Panc1 (cell line): ENCODE measurements at regions of chr11 and their contacts with region 1.

Region 1: GRCh38 chr11:9914064-9914463 is 250.2 kb downstream of the SWAP70 start:
- DNase-seq: no peak
- ATAC-seq: no peak
- H3K4me3 ChIP-seq: no peak overlapping the region
- H3K27ac ChIP-seq: peak overlapping the region; percentile 75
- H3K4me1 ChIP-seq: no peaks in the 10 kb centered on the region
- H3K27me3 ChIP-seq: no peaks in the 10 kb centered on the region
- CTCF ChIP-seq: no peak

Region 2: DNA sequence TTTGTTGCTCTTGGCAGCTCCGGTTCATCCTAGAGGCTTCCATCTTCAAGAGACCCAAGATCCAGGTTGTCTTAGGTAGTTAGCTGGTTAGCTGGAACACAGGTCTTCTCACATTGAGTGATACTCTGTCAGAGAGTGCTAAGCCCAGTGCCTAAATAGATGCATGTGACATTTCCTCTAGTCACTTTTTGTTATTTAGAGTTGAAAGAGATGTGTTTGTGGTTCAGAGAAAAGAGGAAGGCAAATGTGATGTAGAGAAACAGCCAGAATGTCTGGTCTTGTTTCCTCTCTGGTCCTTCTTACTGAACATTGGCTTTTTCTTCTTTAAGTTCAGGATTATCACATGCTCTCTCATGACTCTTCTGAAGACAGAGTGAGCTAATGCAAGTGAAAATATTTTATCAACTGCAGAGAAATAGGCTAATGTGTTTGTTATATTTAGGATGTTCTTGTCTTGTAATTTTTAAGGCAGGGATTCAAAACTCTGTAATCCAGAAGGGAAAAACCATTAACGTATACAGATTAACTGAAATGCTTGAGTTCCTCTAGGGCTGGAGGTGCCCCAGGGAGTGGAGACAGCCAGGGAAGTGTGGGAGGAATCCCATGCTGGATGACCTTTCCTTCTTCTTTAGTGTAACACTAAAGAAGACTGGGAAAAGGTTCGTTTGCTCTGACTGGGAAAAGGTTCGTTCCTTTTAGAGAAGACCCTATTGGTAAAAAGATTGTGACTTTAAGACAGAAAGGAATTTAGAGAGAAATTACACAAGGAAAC is 174.8 kb before region 1 on chr11:
- CTCF ChIA-PET with region 1: interaction called, 10 read pairs
- POLR2A ChIA-PET with region 1: no interaction called
- in situ Hi-C with region 1: no loop called
- intact Hi-C with region 1: no loop called
- DNase-seq: no peak
- ATAC-seq: no peak
- H3K4me3 ChIP-seq: no peak overlapping the region
- H3K27ac ChIP-seq: no peak overlapping the region
- H3K4me1 ChIP-seq: peaks cover 21% of the 10 kb centered on the region
- H3K27me3 ChIP-seq: no peaks in the 10 kb centered on the region
- CTCF ChIP-seq: no peak